Caco-2 (cell line): ENCODE measurements at regions of chr6 and their contacts with region 1.

Region 1: GRCh38 chr6:55886185-55886836 is 10.9 kb upstream of the BMP5 start:
- DNase-seq: no peak
- H3K4me3 ChIP-seq: no peak overlapping the region
- H3K4me3 Mint-ChIP-seq: no peak overlapping the region
- H3K27ac Mint-ChIP-seq: no peak overlapping the region
- H3K4me1 ChIP-seq: peaks cover 11% of the 10 kb centered on the region
- H3K4me1 Mint-ChIP-seq: peaks cover 4% of the 10 kb centered on the region
- H3K27me3 ChIP-seq: no peaks in the 10 kb centered on the region
- H3K27me3 Mint-ChIP-seq: no peaks in the 10 kb centered on the region
- CTCF ChIP-seq: peak; percentile 29 to 35

Region 2: DNA sequence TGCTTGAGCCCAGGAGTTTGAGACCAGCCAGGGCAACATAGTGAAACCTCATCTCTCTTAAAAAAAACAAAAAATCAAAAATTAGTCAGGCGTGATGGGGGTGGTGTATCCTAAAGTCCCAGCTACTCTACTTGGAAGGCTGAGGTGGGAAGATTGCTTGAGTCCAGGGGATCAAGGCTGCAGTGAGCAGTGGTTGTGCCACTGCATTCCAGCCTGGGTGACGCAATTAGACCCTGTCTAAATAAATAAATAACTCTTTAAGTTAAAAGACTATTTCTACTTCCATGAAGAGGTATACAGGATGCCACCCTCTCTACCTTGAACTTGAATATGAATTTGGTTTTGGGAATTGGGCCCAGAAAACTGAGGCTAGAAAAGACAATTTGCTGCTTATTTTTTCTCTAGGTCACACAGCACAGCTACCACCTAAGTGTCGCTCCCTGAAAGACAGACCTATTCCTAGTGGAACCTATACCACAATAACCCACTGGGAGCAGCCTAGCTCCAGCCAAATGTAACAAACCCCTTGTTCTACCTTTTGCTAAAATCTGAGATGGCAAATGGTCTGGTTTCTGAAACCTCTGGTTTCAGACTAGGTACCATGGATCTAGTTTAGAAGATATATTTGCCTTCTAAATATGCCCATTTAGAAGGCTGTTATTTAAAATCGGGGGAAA is 342.5 kb before region 1 on chr6:
- CTCF ChIA-PET with region 1: no interaction called
- POLR2A ChIA-PET with region 1: no interaction called
- intact Hi-C with region 1: loop called (anchors 5 kb)
- DNase-seq: peak in 1 of 2 experiments; percentile 20
- H3K4me3 ChIP-seq: no peak overlapping the region
- H3K4me3 Mint-ChIP-seq: no peak overlapping the region
- H3K27ac Mint-ChIP-seq: no peak overlapping the region
- H3K4me1 ChIP-seq: peaks cover 28% of the 10 kb centered on the region
- H3K4me1 Mint-ChIP-seq: peaks cover 10% of the 10 kb centered on the region
- H3K27me3 ChIP-seq: no peaks in the 10 kb centered on the region
- H3K27me3 Mint-ChIP-seq: no peaks in the 10 kb centered on the region
- CTCF ChIP-seq: peak; percentile 16 to 31

Region 3: GRCh38 chr6:55617272-55617671 is 269.0 kb before region 1 on chr6:
- CTCF ChIA-PET with region 1: interaction called, 3 read pairs
- POLR2A ChIA-PET with region 1: no interaction called
- intact Hi-C with region 1: loop called (anchors 1 kb)
- DNase-seq: peak in 1 of 2 experiments; percentile 50
- H3K4me3 ChIP-seq: no peak overlapping the region
- H3K4me3 Mint-ChIP-seq: no peak overlapping the region
- H3K27ac Mint-ChIP-seq: no peak overlapping the region
- H3K4me1 ChIP-seq: no peaks in the 10 kb centered on the region
- H3K4me1 Mint-ChIP-seq: no peaks in the 10 kb centered on the region
- H3K27me3 ChIP-seq: no peaks in the 10 kb centered on the region
- H3K27me3 Mint-ChIP-seq: no peaks in the 10 kb centered on the region
- CTCF ChIP-seq: peak; percentile 47 to 48